A673 (cell line): ENCODE measurements at regions of chr11 and their contacts with region 1.

Region 1: DNA sequence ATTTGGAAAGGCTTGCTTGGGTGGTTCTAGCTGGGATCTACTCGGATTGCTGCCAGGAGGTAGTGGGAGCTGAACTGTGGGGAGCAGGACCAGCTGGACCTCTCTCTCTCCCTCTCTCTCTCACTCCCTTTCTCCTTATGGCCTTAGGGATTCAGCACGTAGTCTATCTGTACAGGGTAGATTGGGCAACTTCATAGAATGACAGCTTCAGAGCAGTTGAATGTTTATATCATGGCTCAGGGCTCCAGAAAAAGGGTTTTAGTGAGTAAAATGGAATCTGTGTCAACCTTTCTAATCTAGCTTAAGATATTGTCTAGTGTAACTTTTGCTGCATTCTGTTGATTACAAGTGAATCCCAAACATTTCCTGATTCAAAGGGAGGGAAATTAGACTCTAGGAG is 127.7 kb upstream of the PDGFD start:
- DNase-seq: peak; percentile 6
- H3K4me3 ChIP-seq: no peak overlapping the region
- H3K27ac ChIP-seq: no peak overlapping the region
- H3K4me1 ChIP-seq: peaks cover 7% of the 10 kb centered on the region
- H3K27me3 ChIP-seq: no peaks in the 10 kb centered on the region
- CTCF ChIP-seq: no peak

Region 2: GRCh38 chr11:104246590-104246989 is 45.0 kb before region 1 on chr11:
- CTCF ChIA-PET with region 1: no interaction called
- POLR2A ChIA-PET with region 1: no interaction called
- intact Hi-C with region 1: loop called (anchors 5 kb)
- DNase-seq: no peak
- H3K4me3 ChIP-seq: no peak overlapping the region
- H3K27ac ChIP-seq: no peak overlapping the region
- H3K4me1 ChIP-seq: no peaks in the 10 kb centered on the region
- H3K27me3 ChIP-seq: no peaks in the 10 kb centered on the region
- CTCF ChIP-seq: no peak